ENCODE measurements at regions of chr13 and their contacts with region 1.

Region 1: GRCh38 chr13:34708566-34709313 is 233.3 kb upstream of the NBEA start:
- DNase-seq: no peak
- ATAC-seq: no peak

Region 2: GRCh38 chr13:34667286-34668218 is 41.2 kb before region 1 on chr13:
- intact Hi-C with region 1: loop called (anchors 1 kb)
- DNase-seq: no peak
- ATAC-seq: no peak

Measured in sciatic nerve (tissue), 2 donors.